Endothelial cell of umbilical vein (primary cell): ENCODE measurements at regions of chr7 and their contacts with region 1.

Region 1: GRCh38 chr7:135281363-135281949 is 47.8 kb downstream of the STRA8 start:
- DNase-seq: peak; percentile 87
- H3K4me3 ChIP-seq: no peak overlapping the region
- H3K27ac ChIP-seq: peak overlapping the region; percentile 10
- H3K4me1 ChIP-seq: peaks cover 15% of the 10 kb centered on the region
- H3K27me3 ChIP-seq: no peaks in the 10 kb centered on the region
- CTCF ChIP-seq: peak; percentile 94 to 96
- POLR2A ChIP-seq: no peak

Region 2: DNA sequence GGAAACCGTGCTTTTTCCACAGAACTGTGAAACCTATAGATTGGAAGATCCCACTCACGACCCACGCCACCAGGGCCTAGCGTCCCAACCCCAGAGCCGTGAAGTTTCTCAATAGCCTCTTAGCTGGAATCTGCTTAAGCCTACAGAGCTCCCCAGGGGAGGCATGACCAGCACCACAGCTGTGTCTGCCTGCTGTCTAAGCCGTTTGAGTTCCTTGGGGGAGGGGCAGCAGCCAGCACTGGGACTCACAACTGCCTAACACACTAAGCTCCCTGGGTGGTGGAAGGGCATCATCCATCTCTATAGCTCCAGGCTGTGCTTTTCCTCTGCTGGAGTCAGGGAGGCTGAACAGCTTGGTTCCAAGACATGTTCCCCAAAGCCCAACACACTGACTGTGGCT is 159.6 kb before region 1 on chr7:
- CTCF ChIA-PET with region 1: no interaction called
- POLR2A ChIA-PET with region 1: no interaction called
- dilution Hi-C with region 1: no loop called
- intact Hi-C with region 1: no loop called
- DNase-seq: no peak
- H3K4me3 ChIP-seq: no peak overlapping the region
- H3K27ac ChIP-seq: no peak overlapping the region
- H3K4me1 ChIP-seq: no peaks in the 10 kb centered on the region
- H3K27me3 ChIP-seq: peaks cover 0 to 1% of the 10 kb centered on the region in 2 experiments
- CTCF ChIP-seq: no peak
- POLR2A ChIP-seq: no peak

Region 3: DNA sequence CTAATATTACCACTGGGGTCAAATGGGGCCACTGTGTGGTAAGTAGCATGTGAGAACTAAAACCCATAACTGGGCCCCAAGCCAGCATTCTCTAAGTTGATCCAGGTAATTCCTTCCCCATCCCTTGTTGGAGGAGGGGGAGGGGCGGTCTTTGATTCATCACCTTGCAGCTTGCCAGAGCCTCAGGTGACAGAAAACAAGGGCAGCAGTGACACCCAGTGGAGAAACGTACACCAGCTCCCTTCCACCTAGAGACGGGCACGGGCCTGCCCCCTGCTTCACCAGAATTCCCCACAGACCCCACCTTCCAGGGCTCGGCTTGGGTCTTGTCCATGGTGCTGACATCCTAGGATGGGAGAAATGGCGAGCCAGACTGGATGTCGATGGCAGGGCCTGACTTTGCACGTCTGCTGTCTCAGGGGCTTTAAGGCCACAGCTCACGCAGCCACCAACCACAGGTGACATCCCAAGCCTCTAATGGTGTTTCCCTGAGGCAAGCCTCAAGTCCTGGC is 54.2 kb after region 1 on chr7:
- CTCF ChIA-PET with region 1: interaction called, 127 read pairs
- POLR2A ChIA-PET with region 1: no interaction called
- dilution Hi-C with region 1: no loop called
- intact Hi-C with region 1: loop called (anchors 1 kb)
- DNase-seq: peak; percentile 73
- H3K4me3 ChIP-seq: no peak overlapping the region
- H3K27ac ChIP-seq: no peak overlapping the region
- H3K4me1 ChIP-seq: peaks cover 6% of the 10 kb centered on the region
- H3K27me3 ChIP-seq: no peaks in the 10 kb centered on the region
- CTCF ChIP-seq: peak; percentile 39 to 40
- POLR2A ChIP-seq: no peak

Region 4: GRCh38 chr7:135414850-135415439 is 133.5 kb after region 1 on chr7:
- CTCF ChIA-PET with region 1: interaction called, 4 read pairs
- POLR2A ChIA-PET with region 1: no interaction called
- dilution Hi-C with region 1: no loop called
- intact Hi-C with region 1: loop called (anchors 2 kb)
- DNase-seq: peak; percentile 76
- H3K4me3 ChIP-seq: no peak overlapping the region
- H3K27ac ChIP-seq: no peak overlapping the region
- H3K4me1 ChIP-seq: peaks cover 15% of the 10 kb centered on the region
- H3K27me3 ChIP-seq: no peaks in the 10 kb centered on the region
- CTCF ChIP-seq: peak; percentile 46 to 49
- POLR2A ChIP-seq: no peak

Region 5: DNA sequence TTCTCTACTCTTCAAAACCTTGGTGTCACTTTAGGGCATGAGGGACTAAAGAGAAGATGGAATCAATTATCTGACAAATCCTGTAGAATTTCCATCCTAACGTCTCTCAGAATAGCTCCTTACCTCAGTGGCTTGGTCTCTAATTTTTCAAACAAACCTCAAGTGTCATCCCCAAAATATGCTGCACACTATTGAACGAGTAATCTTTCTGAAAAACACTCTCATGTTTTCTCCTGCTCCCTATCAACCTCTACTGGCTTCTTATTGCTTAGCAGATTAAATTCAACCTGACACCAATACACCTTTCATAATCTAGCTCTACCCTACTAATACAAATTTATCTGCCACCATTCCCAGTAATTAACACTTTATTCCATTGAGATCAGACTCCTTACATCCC is 219.9 kb after region 1 on chr7:
- CTCF ChIA-PET with region 1: no interaction called
- POLR2A ChIA-PET with region 1: no interaction called
- dilution Hi-C with region 1: no loop called
- intact Hi-C with region 1: no loop called
- DNase-seq: no peak
- H3K4me3 ChIP-seq: no peak overlapping the region
- H3K27ac ChIP-seq: no peak overlapping the region
- H3K4me1 ChIP-seq: no peaks in the 10 kb centered on the region
- H3K27me3 ChIP-seq: no peaks in the 10 kb centered on the region
- CTCF ChIP-seq: no peak
- POLR2A ChIP-seq: no peak

Region 6: GRCh38 chr7:135558337-135558767 is 276.9 kb after region 1 on chr7:
- CTCF ChIA-PET with region 1: interaction called, 5 read pairs
- POLR2A ChIA-PET with region 1: no interaction called
- dilution Hi-C with region 1: no loop called
- intact Hi-C with region 1: loop called (anchors 1 kb)
- DNase-seq: peak; percentile 77
- H3K4me3 ChIP-seq: peak overlapping the region; percentile 60 to 73 (median 71)
- H3K27ac ChIP-seq: peak overlapping the region; percentile 88
- H3K4me1 ChIP-seq: peaks cover 10% of the 10 kb centered on the region
- H3K27me3 ChIP-seq: no peaks in the 10 kb centered on the region
- CTCF ChIP-seq: peak; percentile 32 to 50
- POLR2A ChIP-seq: no peak

Region 7: DNA sequence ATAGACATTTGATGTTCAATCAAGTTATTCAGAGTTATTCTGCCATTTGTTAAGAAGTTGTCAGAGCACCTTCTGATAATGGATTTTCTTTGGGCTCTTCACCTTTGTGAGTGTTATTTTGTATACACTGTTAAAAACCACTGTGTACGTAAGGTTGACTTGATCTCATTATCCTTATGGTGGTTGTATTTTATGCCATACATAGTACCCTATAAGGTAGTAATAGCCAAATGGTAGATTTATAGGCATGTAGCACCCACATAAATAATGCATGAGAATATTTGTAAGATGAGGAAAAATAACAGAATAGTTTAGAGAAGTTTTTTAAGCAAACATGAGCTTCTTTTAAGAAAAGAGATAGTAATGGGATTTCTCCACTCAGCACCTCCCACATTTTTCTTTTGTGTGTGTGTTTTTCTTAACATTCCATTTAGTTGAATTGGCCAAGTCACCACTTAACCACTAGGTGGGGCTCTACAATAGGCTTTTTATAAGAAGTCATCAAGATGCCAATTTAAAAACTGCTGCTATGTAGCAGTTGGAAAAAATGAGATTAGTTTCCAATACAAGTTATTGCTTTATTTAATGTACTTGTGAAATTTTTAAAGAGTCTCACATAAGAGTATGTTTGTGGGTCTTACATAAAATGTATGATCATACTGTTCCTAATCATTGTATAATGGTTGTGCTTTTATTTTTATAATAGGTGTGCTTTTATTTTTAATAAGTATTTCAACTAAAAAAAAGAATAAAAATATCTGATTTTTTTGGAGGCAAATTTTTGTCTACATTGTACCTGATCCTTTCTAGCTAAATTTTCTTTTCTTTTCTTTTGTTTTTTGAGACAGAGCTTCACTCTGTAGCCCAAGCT is 339.8 kb after region 1 on chr7:
- CTCF ChIA-PET with region 1: interaction called, 5 read pairs
- POLR2A ChIA-PET with region 1: no interaction called
- dilution Hi-C with region 1: no loop called
- intact Hi-C with region 1: loop called (anchors 1 kb)
- DNase-seq: peak; percentile 82
- H3K4me3 ChIP-seq: no peak overlapping the region
- H3K27ac ChIP-seq: no peak overlapping the region
- H3K4me1 ChIP-seq: no peaks in the 10 kb centered on the region
- H3K27me3 ChIP-seq: no peaks in the 10 kb centered on the region
- CTCF ChIP-seq: peak; percentile 64 to 69
- POLR2A ChIP-seq: no peak

Region 8: GRCh38 chr7:135662373-135663114 is 381.1 kb after region 1 on chr7 and contains the start of gene STMP1:
- CTCF ChIA-PET with region 1: interaction called, 3 read pairs
- POLR2A ChIA-PET with region 1: no interaction called
- dilution Hi-C with region 1: no loop called
- intact Hi-C with region 1: loop called (anchors 5 kb)
- DNase-seq: peak; percentile 95
- H3K4me3 ChIP-seq: peak within 1 kb of the TSS; percentile 68 to 91 (median 86)
- H3K27ac ChIP-seq: peak within 1 kb of the TSS; percentile 91
- H3K4me1 ChIP-seq: peaks cover 36% of the 10 kb centered on the region
- H3K27me3 ChIP-seq: no peaks in the 10 kb centered on the region
- CTCF ChIP-seq: peak in 1 of 2 donors; percentile 77
- POLR2A ChIP-seq: peak; percentile 96
- total RNA-seq, gene STMP1: 21.4 and 31.3 TPM in 2 replicates